Cardiac septum (tissue), 1 donor: ENCODE measurements at regions of chr15 and their contacts with region 1.

Region 1: DNA sequence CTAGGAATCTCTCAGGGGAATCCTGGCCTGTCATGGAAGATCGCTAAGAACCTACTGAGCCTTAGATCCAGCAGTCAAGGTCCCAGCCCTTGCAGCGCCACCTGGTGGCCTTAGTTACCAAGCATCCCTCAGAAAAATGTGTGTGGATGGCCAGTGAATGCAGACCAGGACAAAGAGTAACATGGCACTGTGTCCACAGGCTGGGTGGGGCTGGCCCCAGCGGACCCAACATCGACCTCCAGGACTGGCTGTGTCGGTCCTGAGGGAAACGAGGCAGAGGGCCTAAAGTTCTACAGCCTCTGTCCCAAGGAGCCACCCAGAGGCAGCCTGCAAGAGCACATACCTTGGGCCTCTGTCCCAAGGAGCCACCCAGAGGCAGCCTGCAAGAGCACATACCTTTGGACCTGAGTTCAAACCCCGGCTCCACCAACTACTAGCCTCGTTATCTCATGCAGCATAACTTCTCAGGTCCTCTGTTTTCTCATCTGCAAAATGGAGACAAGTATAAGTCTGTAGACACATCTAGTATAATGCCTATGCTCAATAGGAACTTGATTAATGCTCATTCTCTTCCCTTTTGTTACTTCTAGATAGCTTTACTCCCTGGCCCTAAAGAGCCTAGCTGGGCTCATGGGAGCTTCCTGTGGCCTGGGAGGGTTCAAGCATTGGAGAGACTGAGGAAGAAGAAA is 57.5 kb upstream of the HERC1 start:
- DNase-seq: peak; percentile 87

Region 2: DNA sequence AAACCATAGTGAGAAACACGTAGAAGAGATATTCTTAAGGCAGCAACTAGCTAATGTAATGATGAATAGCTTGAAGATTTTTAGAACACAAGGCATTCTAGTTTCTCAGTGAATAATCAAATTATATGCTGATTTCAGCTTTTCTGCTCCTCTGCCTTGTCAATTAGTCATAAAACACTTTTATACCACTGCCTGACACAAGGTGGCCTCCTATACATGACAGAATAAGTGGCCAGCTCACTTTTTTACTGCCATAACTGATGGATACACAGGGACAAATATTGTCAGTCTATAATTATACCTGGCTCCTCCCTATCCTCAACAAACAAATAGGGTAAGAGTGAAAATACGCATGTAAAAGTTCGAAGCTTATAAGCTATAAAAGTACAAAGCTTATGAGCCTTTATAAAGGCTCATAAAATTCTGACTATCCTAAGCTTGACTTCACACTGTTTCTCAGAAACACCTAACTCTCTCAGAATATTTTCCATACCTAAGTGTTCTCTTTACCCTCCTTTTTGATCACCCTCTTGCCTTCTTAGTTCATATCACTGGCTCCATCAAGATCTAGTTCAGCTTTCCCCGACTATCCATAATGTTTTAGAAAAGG is 139.0 kb before region 1 on chr15:
- intact Hi-C with region 1: loop called (anchors 2 kb)
- DNase-seq: no peak

Region 3: DNA sequence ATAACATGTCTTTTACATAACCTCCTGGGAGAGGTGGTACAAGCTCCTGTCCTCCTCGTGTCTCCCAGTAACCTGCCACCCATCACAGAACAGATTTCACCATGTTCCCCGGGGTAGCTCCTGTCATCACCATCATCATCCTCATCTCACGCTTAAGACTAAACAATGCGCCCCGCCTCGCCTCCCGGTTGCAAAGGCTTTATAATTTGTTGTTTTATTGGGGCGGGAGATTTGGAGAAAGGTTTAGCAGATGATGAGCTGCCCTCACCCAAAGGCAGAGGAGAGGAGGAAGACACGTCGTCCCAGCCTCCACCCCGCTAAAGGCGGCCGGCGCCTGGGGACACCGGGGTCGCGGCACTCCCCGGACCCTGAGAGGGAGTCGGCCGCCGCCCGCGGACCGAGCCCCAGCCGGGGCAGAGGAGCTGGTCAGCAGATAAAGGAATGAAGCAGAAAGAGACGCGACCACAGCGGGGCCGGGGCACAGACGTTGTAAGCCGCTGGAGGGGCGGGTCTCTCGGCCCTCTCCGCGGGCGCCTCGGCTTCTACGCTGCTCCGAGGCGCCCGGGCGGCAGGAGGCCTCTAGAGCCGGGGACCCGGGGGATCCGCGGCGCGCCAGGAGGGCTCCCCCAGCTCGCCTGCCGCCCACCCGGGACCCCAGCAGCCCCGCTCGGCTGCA is 58.1 kb before region 1 on chr15:
- intact Hi-C with region 1: loop called (anchors 5 kb)
- DNase-seq: peak; percentile 75

Region 4: GRCh38 chr15:64019764-64020163 is 128.5 kb after region 1 on chr15:
- intact Hi-C with region 1: no loop called
- DNase-seq: no peak

Region 5: GRCh38 chr15:64067564-64068030 is 176.4 kb after region 1 on chr15:
- intact Hi-C with region 1: loop called (anchors 5 kb)
- DNase-seq: peak; percentile 80